ENCODE measurements at regions of chr12 and their contacts with region 1.

Region 1: DNA sequence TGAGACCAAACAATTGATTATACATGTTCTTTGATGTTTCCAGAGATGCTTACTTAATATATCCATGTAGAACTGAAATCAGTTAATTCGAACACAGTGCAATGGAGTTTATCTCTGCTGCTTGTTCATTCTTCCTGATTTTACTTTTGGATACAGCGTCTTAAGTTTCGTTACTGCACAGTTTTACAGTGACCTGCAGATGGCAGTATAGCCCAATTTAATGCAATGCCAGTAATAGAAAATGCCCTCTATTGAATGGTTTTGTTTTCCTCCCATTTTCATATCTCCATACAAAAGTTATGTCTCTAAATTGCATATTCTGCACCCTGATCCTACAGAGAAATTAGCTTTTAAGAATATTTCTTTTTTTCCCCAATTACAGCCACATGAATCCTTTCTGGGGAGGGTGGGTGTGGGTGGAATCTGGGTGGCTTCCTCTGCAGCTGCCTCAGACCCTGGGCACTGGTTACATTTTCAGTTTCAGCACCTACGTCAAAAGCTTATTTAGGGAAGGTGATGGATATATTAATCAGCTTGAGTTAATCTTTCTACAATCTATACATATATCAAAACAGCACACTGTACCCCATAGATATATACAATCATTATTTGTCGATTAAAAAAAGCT is 101.1 kb upstream of the DCD start:
- DNase-seq: peak in 6 of 9 experiments; percentile 23 to 82 (median 42)
- ATAC-seq: peak; percentile 67
- H3K4me3 ChIP-seq: no peak overlapping the region
- H3K4me3 Mint-ChIP-seq: peak overlapping the region; percentile 61
- H3K27ac ChIP-seq: no peak overlapping the region
- H3K27ac Mint-ChIP-seq: no peak overlapping the region
- H3K4me1 ChIP-seq: peaks cover 20% of the 10 kb centered on the region
- H3K4me1 Mint-ChIP-seq: peaks cover 34% of the 10 kb centered on the region
- H3K27me3 ChIP-seq: no peaks in the 10 kb centered on the region
- H3K27me3 Mint-ChIP-seq: no peaks in the 10 kb centered on the region
- CTCF ChIP-seq: peak; percentile 83

Region 2: DNA sequence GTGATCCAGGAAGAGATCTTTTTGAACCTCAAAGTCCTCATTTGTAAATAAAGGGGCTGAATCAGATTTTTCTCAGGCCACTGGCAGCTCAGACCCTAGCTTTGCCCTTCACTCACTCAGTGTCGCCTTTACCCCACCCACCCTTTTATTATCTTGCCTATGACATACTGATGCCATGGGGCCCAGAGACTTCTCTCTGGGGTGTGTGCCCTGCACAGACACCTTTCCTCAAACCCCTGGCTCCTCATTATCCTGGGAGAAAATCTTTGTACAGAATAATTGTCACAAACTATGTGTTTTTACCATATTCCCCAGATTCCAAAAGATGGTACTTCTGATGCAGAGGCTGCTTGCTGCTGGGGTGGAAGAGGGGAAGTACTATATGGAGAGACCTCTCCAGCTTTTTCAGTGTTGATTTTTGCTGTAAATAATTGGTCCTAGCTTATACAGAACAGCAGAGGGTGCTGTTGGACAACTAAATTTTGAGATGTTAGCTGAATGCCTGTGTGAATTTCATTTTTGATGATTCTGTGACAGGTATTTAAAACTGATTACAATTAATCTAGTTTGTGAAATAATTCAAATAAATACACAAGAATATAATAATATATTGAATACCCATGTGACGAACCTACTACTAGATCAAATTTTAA is 47.2 kb before region 1 on chr12:
- CTCF ChIA-PET with region 1: interaction called, 31 read pairs
- POLR2A ChIA-PET with region 1: no interaction called
- intact Hi-C with region 1: loop called (anchors 1 to 2 kb)
- DNase-seq: peak in 3 of 9 experiments; percentile 33 to 77 (median 69)
- ATAC-seq: peak; percentile 54
- H3K4me3 ChIP-seq: no peak overlapping the region
- H3K4me3 Mint-ChIP-seq: no peak overlapping the region
- H3K27ac ChIP-seq: no peak overlapping the region
- H3K27ac Mint-ChIP-seq: no peak overlapping the region
- H3K4me1 ChIP-seq: no peaks in the 10 kb centered on the region
- H3K4me1 Mint-ChIP-seq: no peaks in the 10 kb centered on the region
- H3K27me3 ChIP-seq: no peaks in the 10 kb centered on the region
- H3K27me3 Mint-ChIP-seq: peaks cover 5% of the 10 kb centered on the region
- CTCF ChIP-seq: peak; percentile 84

Region 3: GRCh38 chr12:54734196-54734950 is 14.9 kb before region 1 on chr12:
- CTCF ChIA-PET with region 1: interaction called, 23 read pairs
- POLR2A ChIA-PET with region 1: no interaction called
- intact Hi-C with region 1: no loop called
- DNase-seq: no peak
- ATAC-seq: no peak
- H3K4me3 ChIP-seq: no peak overlapping the region
- H3K4me3 Mint-ChIP-seq: no peak overlapping the region
- H3K27ac ChIP-seq: no peak overlapping the region
- H3K27ac Mint-ChIP-seq: no peak overlapping the region
- H3K4me1 ChIP-seq: peaks cover 19% of the 10 kb centered on the region
- H3K4me1 Mint-ChIP-seq: peaks cover 42% of the 10 kb centered on the region
- H3K27me3 ChIP-seq: no peaks in the 10 kb centered on the region
- H3K27me3 Mint-ChIP-seq: no peaks in the 10 kb centered on the region
- CTCF ChIP-seq: no peak

Region 4: GRCh38 chr12:54853995-54854566 is 104.8 kb after region 1 on chr12 and contains the start of gene MUCL1:
- CTCF ChIA-PET with region 1: interaction called, 54 read pairs
- POLR2A ChIA-PET with region 1: no interaction called
- intact Hi-C with region 1: loop called (anchors 1 to 2 kb)
- DNase-seq: peak; percentile 52 to 83 (median 72)
- ATAC-seq: peak; percentile 100
- H3K4me3 ChIP-seq: no peak within 1 kb of the TSS
- H3K4me3 Mint-ChIP-seq: no peak within 1 kb of the TSS
- H3K27ac ChIP-seq: no peak within 1 kb of the TSS
- H3K27ac Mint-ChIP-seq: no peak within 1 kb of the TSS
- H3K4me1 ChIP-seq: no peaks in the 10 kb centered on the region
- H3K4me1 Mint-ChIP-seq: peaks cover 4% of the 10 kb centered on the region
- H3K27me3 ChIP-seq: no peaks in the 10 kb centered on the region
- H3K27me3 Mint-ChIP-seq: peaks cover 2% of the 10 kb centered on the region
- CTCF ChIP-seq: peak; percentile 93
- total RNA-seq, gene MUCL1: not detected

Region 5: GRCh38 chr12:54935235-54935951 is 186.1 kb after region 1 on chr12:
- CTCF ChIA-PET with region 1: interaction called, 19 read pairs
- POLR2A ChIA-PET with region 1: no interaction called
- intact Hi-C with region 1: loop called in 1 of 2 experiments (anchors 2 kb)
- DNase-seq: peak in 7 of 9 experiments; percentile 12 to 69 (median 36)
- ATAC-seq: peak; percentile 91
- H3K4me3 ChIP-seq: no peak overlapping the region
- H3K4me3 Mint-ChIP-seq: peak overlapping the region; percentile 55
- H3K27ac ChIP-seq: peak overlapping the region in 1 of 2 experiments; percentile 66
- H3K27ac Mint-ChIP-seq: peak overlapping the region; percentile 93
- H3K4me1 ChIP-seq: peaks cover 37% of the 10 kb centered on the region
- H3K4me1 Mint-ChIP-seq: peaks cover 47% of the 10 kb centered on the region
- H3K27me3 ChIP-seq: no peaks in the 10 kb centered on the region
- H3K27me3 Mint-ChIP-seq: no peaks in the 10 kb centered on the region
- CTCF ChIP-seq: no peak

Region 6: DNA sequence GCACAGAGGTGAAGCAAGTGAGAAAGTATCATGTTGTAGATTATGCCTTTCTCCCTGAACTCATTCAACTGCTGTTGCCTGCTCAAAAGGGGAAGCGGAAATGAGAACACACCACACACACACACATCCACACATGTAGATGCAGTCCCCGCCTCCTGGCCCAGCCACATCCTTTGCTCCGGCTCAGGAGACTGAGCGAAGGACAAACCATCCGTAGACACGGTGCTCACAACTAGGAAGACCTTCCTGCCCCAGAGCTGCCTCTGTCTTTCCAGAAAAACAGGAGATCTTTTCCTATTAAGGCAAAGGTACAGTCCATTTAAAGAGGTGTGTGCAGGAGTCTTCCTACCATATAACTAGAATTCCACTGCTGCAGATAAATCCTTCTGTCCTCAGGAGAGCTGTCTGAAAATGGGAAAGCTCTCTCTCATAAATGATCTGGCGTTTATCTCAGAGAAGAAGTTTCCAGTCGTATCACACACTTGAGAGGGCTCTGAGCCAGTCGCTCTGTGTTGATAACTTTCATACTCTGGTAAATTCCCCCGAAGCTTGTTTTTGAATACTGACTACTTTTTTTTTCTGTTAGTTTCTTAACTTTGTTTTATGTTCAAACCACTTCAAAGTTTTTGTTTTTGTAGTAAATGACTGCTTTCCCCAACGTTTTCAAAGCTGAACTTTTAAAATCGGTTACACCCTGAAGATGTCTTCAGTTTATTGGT is 235.5 kb after region 1 on chr12 and contains the start of gene TESPA1:
- CTCF ChIA-PET with region 1: interaction called, 18 read pairs
- POLR2A ChIA-PET with region 1: interaction called, 10 read pairs
- intact Hi-C with region 1: no loop called
- DNase-seq: peak; percentile 64 to 94 (median 87)
- ATAC-seq: peak; percentile 87
- H3K4me3 ChIP-seq: peak within 1 kb of the TSS; percentile 52 to 59
- H3K4me3 Mint-ChIP-seq: peak within 1 kb of the TSS; percentile 89
- H3K27ac ChIP-seq: peak within 1 kb of the TSS; percentile 87 to 88
- H3K27ac Mint-ChIP-seq: peak within 1 kb of the TSS; percentile 98
- H3K4me1 ChIP-seq: peaks cover 61% of the 10 kb centered on the region
- H3K4me1 Mint-ChIP-seq: peaks cover 93% of the 10 kb centered on the region
- H3K27me3 ChIP-seq: no peaks in the 10 kb centered on the region
- H3K27me3 Mint-ChIP-seq: no peaks in the 10 kb centered on the region
- CTCF ChIP-seq: no peak
- total RNA-seq, gene TESPA1: 70.9 to 84.8 TPM

Region 7: DNA sequence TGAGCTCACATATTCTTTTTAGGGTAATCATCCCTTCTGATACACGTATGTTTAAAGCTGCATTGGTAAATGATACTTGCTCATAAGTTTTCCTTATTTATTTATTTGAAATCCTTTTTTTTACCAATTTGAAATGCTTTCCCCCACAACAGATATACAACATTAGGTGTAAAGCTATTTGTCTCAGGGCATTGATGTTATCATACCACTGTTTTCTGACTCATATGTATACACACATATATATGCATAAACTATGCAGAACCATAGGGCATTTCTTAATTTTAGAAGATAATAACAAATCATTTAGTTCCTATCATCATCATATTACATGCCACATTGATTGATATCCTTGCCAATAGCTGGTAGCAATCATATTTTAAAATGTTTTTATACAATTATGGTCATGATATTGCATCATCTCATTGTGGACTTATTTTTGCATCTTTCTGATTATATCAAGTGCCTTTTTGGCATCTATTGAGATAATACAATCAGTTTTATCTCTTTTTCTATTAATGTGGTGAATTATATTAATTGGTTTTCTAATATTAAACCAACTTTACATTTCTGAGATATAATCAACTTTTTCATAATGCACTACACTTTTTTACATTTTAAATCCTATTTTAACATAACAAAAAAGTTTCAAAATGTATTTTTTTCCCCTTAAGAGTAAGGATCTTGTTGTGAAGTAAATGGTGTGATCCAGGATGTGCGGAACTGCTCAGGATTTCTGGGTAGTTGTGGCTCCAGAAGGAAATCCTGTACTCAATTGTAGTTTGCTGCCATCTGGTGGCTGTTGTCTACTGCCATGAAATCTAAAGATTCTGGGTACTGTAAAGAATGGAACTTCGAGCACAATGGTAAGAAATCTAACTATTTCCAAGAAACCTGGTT is 393.6 kb after region 1 on chr12:
- CTCF ChIA-PET with region 1: interaction called, 7 read pairs
- POLR2A ChIA-PET with region 1: no interaction called
- intact Hi-C with region 1: loop called in 1 of 2 experiments (anchors 1 kb)
- DNase-seq: peak; percentile 6 to 65 (median 42)
- ATAC-seq: no peak
- H3K4me3 ChIP-seq: no peak overlapping the region
- H3K4me3 Mint-ChIP-seq: no peak overlapping the region
- H3K27ac ChIP-seq: no peak overlapping the region
- H3K27ac Mint-ChIP-seq: no peak overlapping the region
- H3K4me1 ChIP-seq: peaks cover 3% of the 10 kb centered on the region
- H3K4me1 Mint-ChIP-seq: peaks cover 5% of the 10 kb centered on the region
- H3K27me3 ChIP-seq: no peaks in the 10 kb centered on the region
- H3K27me3 Mint-ChIP-seq: peaks cover 5% of the 10 kb centered on the region
- CTCF ChIP-seq: peak; percentile 81

Measured in CD8-positive, alpha-beta T cell (primary cell).